ENCODE measurements at regions of chr13 and their contacts with region 1.

Region 1: GRCh38 chr13:42039946-42040729 is 8.3 kb upstream of the DGKH start:
- DNase-seq: peak; percentile 90 to 96
- H3K4me3 ChIP-seq: peak overlapping the region; percentile 81 to 88
- H3K27ac ChIP-seq: peak overlapping the region; percentile 95 to 98
- H3K4me1 ChIP-seq: peaks cover 0 to 16% (median 2%) of the 10 kb centered on the region in 4 donors
- H3K27me3 ChIP-seq: no peaks in the 10 kb centered on the region
- CTCF ChIP-seq: no peak

Region 2: GRCh38 chr13:41492404-41493260 is 547.5 kb before region 1 on chr13:
- intact Hi-C with region 1: no loop called
- DNase-seq: no peak
- H3K4me3 ChIP-seq: no peak overlapping the region
- H3K27ac ChIP-seq: no peak overlapping the region
- H3K4me1 ChIP-seq: peaks cover 0 to 38% (median 13%) of the 10 kb centered on the region in 4 donors
- H3K27me3 ChIP-seq: no peaks in the 10 kb centered on the region
- CTCF ChIP-seq: no peak

Region 3: DNA sequence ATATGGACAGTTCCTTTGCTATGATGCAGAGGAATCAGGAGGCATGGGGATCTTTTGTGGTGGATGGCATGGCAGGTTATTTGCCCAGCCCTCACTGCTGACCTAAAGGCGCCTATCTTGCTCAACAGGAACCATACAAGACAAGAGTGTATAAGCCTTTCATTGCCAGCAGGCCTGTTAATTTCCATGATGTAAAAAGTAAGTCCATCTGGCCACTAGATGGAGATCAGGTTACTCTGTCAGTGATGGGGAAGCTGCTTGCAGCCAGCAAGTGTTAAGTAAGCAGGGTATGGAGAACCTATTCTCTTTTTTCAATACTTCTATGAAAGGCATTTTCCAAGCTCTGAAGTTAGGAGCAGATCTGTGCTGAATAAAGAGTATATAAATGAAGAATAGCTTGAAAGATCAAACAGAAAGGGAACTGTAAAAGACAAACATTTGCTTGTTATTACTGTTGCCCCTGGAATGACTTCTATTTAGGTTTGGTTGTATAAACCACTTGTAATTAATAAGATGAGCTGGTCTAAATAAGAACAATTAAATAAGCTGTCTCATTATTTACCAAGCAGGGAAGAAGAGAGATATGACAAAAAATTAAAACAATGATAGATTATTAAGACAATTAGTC is 371.9 kb before region 1 on chr13:
- intact Hi-C with region 1: loop called (anchors 10 kb)
- DNase-seq: peak; percentile 57 to 70
- H3K4me3 ChIP-seq: no peak overlapping the region
- H3K27ac ChIP-seq: no peak overlapping the region
- H3K4me1 ChIP-seq: no peaks in the 10 kb centered on the region
- H3K27me3 ChIP-seq: no peaks in the 10 kb centered on the region
- CTCF ChIP-seq: peak; percentile 76 to 90

Region 4: GRCh38 chr13:41942462-41943094 is 97.6 kb before region 1 on chr13:
- intact Hi-C with region 1: no loop called
- DNase-seq: no peak
- H3K4me3 ChIP-seq: no peak overlapping the region
- H3K27ac ChIP-seq: no peak overlapping the region
- H3K4me1 ChIP-seq: peaks cover 0 to 4% (median 0%) of the 10 kb centered on the region in 4 donors
- H3K27me3 ChIP-seq: no peaks in the 10 kb centered on the region
- CTCF ChIP-seq: no peak

Region 5: DNA sequence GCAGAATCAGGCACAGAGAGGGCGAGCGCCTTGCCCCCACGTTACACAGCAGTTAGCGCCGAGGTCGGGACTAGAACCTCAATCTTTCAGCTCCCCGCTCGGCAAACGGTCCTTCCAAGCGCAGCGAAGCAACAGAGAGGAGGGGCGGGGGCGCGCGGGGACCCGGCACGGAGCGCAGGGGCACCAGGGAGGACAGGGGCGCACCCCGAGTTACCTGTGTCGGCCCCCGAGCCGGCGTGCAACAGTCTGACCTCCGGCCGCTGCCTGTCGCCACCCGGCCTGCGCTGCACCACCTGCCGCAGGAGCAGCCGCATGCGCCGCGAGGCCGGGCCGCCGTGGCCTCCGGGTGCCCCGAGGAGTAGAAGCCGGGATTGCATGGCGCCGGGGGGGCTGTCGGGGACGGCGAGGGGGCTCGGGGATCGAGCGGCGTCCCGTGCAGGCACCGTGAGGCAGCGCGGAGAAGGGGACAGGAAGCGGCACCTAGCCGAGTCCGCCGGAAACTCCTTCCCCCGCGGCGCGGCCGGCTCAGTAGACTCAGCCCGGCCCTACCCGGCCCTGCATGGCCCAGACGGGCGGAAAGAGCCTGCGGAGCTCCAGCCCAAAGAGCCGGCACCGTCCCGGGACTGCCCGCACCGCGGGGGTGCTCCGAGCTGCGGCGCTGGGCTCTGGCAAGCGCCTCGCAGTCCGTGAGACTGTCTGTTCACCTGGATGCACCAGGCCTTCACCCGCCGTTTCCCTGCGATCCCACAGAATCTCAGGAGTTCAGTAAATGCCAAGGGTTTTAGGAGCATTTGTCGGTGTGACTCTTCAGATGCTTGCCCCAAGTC is 79.3 kb before region 1 on chr13 and contains the start of gene VWA8:
- intact Hi-C with region 1: loop called (anchors 5 kb)
- DNase-seq: peak; percentile 51 to 84
- H3K4me3 ChIP-seq: peak within 1 kb of the TSS; percentile 87 to 95
- H3K27ac ChIP-seq: peak within 1 kb of the TSS; percentile 86 to 93
- H3K4me1 ChIP-seq: peaks cover 0 to 16% (median 7%) of the 10 kb centered on the region in 4 donors
- H3K27me3 ChIP-seq: no peaks in the 10 kb centered on the region
- CTCF ChIP-seq: no peak